ENCODE measurements at regions of chr14 and their contacts with region 1.

Region 1: DNA sequence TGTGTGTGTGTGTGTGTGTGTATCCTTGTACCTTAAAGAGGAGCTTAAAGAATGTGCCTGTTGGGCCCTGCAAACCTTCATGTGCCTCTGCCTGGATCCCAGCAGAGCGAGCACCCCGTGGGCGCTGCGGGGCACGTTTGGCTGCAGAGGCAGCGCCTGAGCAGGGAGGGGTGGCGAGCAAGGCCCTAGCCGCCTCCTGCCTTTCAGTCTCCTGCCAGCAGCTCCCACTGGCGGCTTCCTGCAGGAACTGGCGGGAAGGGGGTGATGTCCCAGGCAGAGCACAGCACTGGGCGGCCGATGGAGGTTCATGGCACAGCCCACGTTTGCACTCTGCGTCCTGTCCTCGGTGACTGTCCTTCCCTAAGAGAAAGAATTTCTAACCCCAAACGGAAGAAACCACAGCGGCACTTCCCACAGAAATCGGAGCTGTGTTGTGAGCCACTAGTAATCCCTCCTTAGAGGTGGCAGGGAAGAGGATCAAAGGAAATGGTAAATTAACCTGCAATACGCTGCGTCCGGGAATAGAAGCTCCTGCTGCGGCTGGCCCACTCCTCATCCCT is 19.8 kb downstream of the ZBTB42 start:
- DNase-seq: no peak
- H3K4me3 ChIP-seq: no peak overlapping the region
- CTCF ChIP-seq: no peak
- POLR2A ChIP-seq: no peak

Region 2: GRCh38 chr14:104494483-104494882 is 326.3 kb before region 1 on chr14:
- intact Hi-C with region 1: no loop called
- DNase-seq: no peak
- H3K4me3 ChIP-seq: no peak overlapping the region
- CTCF ChIP-seq: no peak
- POLR2A ChIP-seq: no peak

Region 3: DNA sequence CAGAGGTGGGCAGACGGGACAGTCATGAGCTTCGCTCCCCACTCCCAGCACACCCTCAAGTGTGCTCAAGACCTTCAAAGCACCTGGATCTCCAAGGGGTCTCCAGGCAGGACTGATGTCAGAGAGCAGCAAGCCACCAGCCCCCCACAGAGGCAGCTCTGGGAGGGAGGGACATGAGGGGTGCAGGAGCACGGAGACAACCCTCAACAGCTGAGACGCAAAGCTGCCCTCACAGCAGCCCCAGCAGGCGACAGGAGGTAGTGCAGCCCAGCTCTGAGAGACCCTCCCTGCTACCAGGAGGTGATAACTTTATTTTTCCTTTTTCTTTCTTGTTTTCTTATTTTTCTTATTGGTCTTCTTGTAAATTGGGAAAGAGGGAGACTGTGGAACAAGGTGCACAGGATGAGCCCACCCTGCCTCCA is 49.9 kb before region 1 on chr14:
- intact Hi-C with region 1: loop called (anchors 5 kb)
- DNase-seq: no peak
- H3K4me3 ChIP-seq: no peak overlapping the region
- CTCF ChIP-seq: no peak
- POLR2A ChIP-seq: no peak

Measured in lower leg skin (tissue), 4 donors.